ENCODE measurements at regions of chr9 and their contacts with region 1.

Region 1: GRCh38 chr9:94014065-94014654 is 59.0 kb upstream of the BARX1 start:
- DNase-seq: peak in 1 of 5 donors; percentile 2
- H3K4me3 ChIP-seq: no peak overlapping the region
- H3K4me3 Mint-ChIP-seq: no peak overlapping the region
- H3K27ac ChIP-seq: no peak overlapping the region
- H3K27ac Mint-ChIP-seq: no peak overlapping the region
- H3K4me1 ChIP-seq: peaks cover 13% of the 10 kb centered on the region
- H3K4me1 Mint-ChIP-seq: peaks cover 8 to 14% (median 11%) of the 10 kb centered on the region in 4 donors
- H3K27me3 ChIP-seq: no peaks in the 10 kb centered on the region
- H3K27me3 Mint-ChIP-seq: no peaks in the 10 kb centered on the region

Region 2: DNA sequence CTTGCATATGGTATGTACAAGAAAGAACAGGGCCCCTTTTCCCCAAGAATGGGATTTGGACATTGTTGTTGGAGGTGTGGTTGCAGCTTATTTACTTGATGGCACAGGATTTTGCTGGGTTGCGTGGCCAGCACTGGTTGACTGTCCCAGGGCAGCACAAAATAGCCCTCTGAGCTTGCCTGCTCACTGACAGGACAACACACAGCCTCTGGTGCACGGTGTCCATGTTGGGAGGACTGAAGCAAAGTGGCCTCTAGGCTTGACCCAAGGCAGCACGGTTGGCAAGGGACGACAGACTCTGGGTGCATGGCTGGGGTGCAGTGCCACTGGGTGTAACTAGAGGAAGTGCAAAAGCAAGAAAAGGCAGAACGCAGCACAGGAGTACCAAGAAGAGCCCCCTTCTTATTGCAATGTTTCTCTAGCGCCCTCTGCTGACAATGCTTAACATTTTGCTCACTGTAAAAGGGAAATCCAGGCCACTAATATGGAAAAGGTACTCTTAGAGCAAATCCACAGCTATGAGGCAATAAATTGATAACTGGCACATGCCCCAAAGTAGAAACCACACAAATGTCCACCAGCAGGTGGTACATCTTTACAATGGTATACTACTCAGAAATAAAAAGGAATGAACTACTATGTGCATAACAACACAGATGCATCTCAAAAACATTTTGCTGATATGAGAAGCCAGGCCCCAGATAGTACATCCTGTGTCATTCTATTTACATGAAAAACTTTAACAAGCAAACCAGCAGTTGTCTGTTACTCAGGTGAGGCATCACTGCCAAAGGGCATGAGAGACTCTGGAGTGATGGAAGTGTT is 11.6 kb before region 1 on chr9:
- CTCF ChIA-PET with region 1: interaction called, 37 read pairs
- POLR2A ChIA-PET with region 1: no interaction called
- intact Hi-C with region 1: no loop called
- DNase-seq: peak in 1 of 5 donors; percentile 7
- H3K4me3 ChIP-seq: no peak overlapping the region
- H3K4me3 Mint-ChIP-seq: no peak overlapping the region
- H3K27ac ChIP-seq: no peak overlapping the region
- H3K27ac Mint-ChIP-seq: no peak overlapping the region
- H3K4me1 ChIP-seq: no peaks in the 10 kb centered on the region
- H3K4me1 Mint-ChIP-seq: no peaks in the 10 kb centered on the region
- H3K27me3 ChIP-seq: no peaks in the 10 kb centered on the region
- H3K27me3 Mint-ChIP-seq: peaks cover 12 to 14% of the 10 kb centered on the region in 2 donors